KBM-7 (cell line): ENCODE measurements at regions of chrX and their contacts with region 1.

Region 1: DNA sequence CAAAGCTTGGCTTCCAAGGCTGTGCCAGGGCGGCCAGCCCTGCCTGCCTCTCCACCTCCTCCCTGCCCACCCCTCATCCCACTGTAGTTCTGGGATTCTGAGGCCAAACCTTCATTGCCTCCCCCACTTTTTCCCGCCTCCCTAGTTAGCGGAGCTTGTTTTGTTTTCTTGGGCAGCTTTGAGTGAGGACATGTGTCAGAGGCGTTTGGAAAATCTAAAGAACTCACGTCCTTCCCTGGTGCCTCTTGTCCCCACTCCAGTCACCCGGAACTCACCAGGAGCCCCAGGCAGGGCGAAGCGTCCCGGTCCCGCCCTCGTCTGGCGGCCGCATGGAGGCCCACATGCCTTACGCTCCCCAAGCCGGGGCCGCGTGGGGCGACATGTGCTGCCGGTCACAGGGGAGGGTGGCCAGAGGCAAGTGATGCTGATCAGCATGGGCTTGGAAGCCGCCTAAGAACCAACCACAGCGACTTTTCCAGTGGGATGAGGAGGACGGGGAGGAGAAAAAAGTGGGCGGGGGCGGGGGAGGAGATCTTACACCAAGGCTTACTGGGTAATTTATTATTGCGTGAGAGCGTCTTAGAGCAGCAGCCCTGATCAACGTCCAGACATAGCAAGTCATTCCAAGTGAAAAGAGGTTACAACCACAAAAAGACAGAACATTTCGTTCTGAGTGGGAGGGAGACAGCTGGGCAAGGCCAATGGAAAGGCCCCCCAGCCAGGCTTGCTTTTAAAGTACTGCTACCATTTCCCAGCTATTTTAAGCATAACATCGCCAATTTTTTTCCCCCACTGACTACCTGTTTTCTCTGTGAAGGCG is 48.5 kb downstream of the PRPS1 start:
- DNase-seq: peak; percentile 96

Region 2: GRCh38 chrX:107272431-107272921 is 404.3 kb before region 1 on chrX:
- in situ Hi-C with region 1: no loop called
- DNase-seq: no peak

Region 3: GRCh38 chrX:107710617-107711391 is 34.0 kb after region 1 on chrX:
- in situ Hi-C with region 1: loop called (anchors 5 kb)
- DNase-seq: peak; percentile 96

Region 4: GRCh38 chrX:107902721-107903120 is 226.0 kb after region 1 on chrX:
- in situ Hi-C with region 1: no loop called
- DNase-seq: no peak